ENCODE measurements at regions of chr1 and their contacts with region 1.

Region 1: GRCh38 chr1:2927393-2928360 is 93.6 kb upstream of the ACTRT2 start:
- DNase-seq: peak; percentile 65 to 87
- H3K4me3 ChIP-seq: peak overlapping the region in 1 of 2 donors; percentile 45
- H3K27ac ChIP-seq: peak overlapping the region; percentile 92 to 95
- H3K4me1 ChIP-seq: peaks cover 12 to 34% of the 10 kb centered on the region in 2 donors
- H3K27me3 ChIP-seq: no peaks in the 10 kb centered on the region
- CTCF ChIP-seq: no peak

Region 2: DNA sequence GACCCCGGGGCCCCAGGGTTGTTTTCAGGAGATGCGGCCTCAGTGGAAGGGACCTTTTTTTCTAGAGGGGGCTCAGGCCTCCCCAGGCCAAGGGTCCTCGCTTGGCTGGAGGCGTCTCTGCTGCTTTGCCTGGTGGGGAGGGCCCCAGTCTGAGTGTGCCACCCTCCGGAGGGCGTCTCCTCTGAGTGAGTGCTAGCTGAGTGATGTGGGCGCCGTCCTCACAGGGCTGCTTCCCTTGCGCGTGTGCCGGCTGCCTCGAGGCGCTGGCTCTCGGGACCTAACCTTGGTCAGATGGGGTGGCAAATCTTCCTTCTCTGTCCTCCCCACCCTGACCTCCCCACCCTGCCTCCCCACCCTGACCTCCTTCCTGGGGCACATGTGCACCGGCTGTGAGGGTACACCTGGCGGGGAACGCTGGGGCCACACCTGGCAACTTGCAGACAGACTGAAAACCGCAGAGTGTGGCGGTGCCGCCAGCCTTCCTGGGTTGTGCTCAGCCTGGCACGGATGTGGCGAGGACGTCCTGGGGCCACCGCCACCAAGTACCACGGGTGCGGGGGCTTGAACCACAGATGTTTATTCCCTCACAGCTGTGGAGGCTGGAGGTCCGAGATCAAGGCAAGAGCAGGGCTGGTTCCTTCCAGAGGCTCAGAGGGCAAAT is 33.2 kb before region 1 on chr1:
- intact Hi-C with region 1: no loop called
- DNase-seq: no peak
- H3K4me3 ChIP-seq: no peak overlapping the region
- H3K27ac ChIP-seq: no peak overlapping the region
- H3K4me1 ChIP-seq: no peaks in the 10 kb centered on the region
- H3K27me3 ChIP-seq: no peaks in the 10 kb centered on the region
- CTCF ChIP-seq: no peak

Region 3: DNA sequence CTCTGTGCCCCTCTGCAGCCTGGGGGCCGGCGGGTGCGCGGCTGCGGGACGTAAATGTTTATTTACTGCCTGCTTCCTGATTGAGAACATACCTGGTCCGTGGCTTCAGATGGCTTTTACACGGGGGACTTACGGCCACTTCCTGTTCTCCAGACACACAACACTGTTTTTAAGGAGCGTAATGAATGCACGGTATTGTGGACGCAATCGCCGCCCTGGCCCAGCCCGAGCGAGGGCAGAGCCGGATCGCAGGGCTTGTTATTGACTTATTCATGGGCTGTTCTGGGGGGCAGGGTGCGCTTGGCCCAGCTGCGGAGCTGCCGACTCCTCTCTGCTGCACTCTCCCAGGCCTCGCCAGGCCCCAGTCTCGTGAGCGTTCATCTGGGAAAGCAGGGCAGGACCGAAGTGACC is 40.8 kb after region 1 on chr1:
- intact Hi-C with region 1: loop called (anchors 5 kb)
- DNase-seq: peak in 1 of 2 donors; percentile 62
- H3K4me3 ChIP-seq: no peak overlapping the region
- H3K27ac ChIP-seq: no peak overlapping the region
- H3K4me1 ChIP-seq: peaks cover 2 to 11% of the 10 kb centered on the region in 2 donors
- H3K27me3 ChIP-seq: no peaks in the 10 kb centered on the region
- CTCF ChIP-seq: no peak

Region 4: GRCh38 chr1:2979191-2980072 is 51.8 kb after region 1 on chr1:
- intact Hi-C with region 1: loop called (anchors 5 kb)
- DNase-seq: peak in 1 of 2 donors; percentile 68
- H3K4me3 ChIP-seq: no peak overlapping the region
- H3K27ac ChIP-seq: peak overlapping the region; percentile 39 to 57
- H3K4me1 ChIP-seq: peaks cover 28 to 63% of the 10 kb centered on the region in 2 donors
- H3K27me3 ChIP-seq: no peaks in the 10 kb centered on the region
- CTCF ChIP-seq: no peak

Region 5: DNA sequence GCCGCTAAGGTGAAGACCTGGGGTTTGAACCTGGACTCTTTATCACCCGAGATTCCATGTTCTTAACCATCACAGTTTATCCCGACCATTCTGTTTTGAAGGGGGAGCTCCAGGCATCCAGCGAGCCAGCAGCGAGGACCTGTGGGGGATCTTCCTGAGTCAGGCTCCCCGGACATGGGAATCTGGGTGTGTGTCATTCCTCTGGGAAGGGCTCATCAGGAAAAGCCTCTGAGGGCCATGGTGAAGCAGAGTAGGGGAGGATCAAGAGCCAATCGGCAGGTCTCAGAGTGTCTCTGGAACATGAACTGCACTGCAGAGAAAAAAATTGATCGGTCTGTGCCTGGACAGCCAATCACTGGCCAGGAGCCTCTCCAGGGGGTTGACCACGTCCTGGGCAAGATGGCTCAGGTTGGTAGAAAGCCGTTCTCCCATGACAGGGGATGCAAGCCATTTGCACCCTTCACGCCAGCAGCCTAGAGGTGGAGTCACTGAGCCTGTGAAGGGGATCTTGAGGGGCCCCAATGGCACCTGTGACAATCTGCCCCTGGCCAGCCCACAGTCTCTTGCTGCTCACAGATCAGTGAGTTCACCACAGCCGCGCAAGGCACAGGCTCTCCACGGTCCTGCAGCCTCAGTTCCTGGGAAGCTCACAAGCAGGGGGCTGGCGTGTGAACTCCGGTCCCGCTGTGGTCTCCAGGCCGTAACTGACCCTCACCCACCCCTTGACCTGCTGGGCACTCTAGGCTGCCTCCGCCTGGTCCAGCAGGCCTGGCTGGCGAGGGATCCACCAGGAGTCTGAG is 73.2 kb after region 1 on chr1:
- intact Hi-C with region 1: loop called (anchors 5 kb)
- DNase-seq: peak in 1 of 2 donors; percentile 61
- H3K4me3 ChIP-seq: no peak overlapping the region
- H3K27ac ChIP-seq: peak overlapping the region in 1 of 2 donors; percentile 78
- H3K4me1 ChIP-seq: peaks cover 13 to 39% of the 10 kb centered on the region in 2 donors
- H3K27me3 ChIP-seq: no peaks in the 10 kb centered on the region
- CTCF ChIP-seq: no peak

Region 6: GRCh38 chr1:3060601-3061551 is 133.2 kb after region 1 on chr1:
- intact Hi-C with region 1: loop called (anchors 5 kb)
- DNase-seq: peak in 1 of 2 donors; percentile 61
- H3K4me3 ChIP-seq: no peak overlapping the region
- H3K27ac ChIP-seq: no peak overlapping the region
- H3K4me1 ChIP-seq: peaks cover 2 to 30% of the 10 kb centered on the region in 2 donors
- H3K27me3 ChIP-seq: no peaks in the 10 kb centered on the region
- CTCF ChIP-seq: no peak

Region 7: GRCh38 chr1:3319874-3320245 is 392.2 kb after region 1 on chr1:
- intact Hi-C with region 1: no loop called
- DNase-seq: no peak
- H3K4me3 ChIP-seq: no peak overlapping the region
- H3K27ac ChIP-seq: peak overlapping the region; percentile 15 to 51
- H3K4me1 ChIP-seq: peaks cover 10 to 63% of the 10 kb centered on the region in 2 donors
- H3K27me3 ChIP-seq: no peaks in the 10 kb centered on the region
- CTCF ChIP-seq: peak; percentile 57 to 75 (median 74)

Region 8: DNA sequence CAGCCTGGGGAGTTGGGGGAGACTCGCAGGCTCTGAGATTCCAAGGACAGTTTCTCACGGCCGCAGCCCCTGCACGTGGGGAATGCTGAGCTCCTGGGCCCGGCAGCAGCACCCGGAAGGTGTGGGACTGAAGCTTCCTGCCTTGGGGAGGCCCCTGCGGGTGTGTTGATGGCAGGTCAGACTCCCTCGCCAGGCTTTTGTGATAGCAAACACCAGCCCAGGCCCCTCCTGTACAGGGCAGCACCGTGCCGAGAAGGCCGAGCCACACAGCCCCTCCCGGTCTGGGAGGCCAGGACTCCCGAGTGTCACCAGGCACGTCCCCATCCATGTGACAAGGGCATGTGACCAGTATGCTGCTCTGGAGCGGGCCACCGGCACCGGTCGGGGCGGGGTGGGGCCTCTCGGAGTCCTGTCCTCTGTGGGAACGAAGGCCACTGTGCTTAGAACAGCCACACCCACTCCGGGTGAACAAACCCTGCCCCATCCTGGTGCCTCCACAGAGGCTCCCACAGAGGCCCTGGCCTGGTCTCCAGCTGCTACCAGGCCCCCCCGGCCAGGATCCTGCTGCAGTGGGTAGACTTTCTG is 495.7 kb after region 1 on chr1:
- intact Hi-C with region 1: loop called (anchors 5 kb)
- DNase-seq: peak; percentile 77 to 87
- H3K4me3 ChIP-seq: no peak overlapping the region
- H3K27ac ChIP-seq: peak overlapping the region; percentile 77 to 92
- H3K4me1 ChIP-seq: peaks cover 6 to 43% of the 10 kb centered on the region in 2 donors
- H3K27me3 ChIP-seq: no peaks in the 10 kb centered on the region
- CTCF ChIP-seq: no peak